Left ventricle myocardium superior (tissue), 1 donor: ENCODE measurements at regions of chr16 and their contacts with region 1.

Region 1: DNA sequence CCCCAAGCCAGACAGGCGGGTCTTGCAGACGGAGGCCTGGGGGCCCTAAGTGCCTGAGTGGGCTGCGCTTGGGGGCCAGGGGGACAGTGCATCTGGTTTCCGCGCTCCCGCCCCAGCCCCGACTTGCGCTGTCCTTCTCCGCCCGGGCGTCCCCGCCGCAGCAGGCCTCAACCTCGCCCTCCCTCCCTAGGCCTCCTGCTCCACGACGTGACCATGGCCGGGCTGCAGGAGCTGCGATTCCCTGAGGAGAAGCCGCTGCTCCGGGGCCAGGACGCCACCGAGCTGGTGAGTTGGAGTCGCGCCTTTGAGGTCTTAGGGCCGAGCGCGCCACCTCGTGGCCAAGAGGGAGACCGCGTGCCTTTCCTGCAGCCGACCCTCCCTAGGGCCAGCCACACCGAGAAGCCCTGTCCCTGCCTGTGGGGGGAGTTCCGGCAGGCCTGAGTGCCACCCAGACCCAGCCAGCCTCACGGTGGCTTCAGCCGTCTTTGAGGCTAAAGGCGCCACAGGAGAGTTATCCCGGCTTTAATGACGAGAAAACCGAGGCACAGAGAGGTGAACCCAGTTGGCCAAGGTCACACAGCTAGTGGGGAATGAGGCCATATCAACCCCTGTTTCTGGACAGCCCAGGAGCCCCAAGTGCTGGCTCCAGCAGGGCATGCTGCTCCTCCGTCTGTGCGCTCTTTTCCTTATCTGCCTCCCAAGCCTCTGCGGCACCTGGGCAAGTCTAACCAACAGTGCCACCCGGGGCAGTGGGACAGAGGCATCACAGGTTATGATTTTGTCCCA is 12.2 kb upstream of the NDRG4 start:
- DNase-seq: peak; percentile 93
- ATAC-seq: peak; percentile 73

Region 2: DNA sequence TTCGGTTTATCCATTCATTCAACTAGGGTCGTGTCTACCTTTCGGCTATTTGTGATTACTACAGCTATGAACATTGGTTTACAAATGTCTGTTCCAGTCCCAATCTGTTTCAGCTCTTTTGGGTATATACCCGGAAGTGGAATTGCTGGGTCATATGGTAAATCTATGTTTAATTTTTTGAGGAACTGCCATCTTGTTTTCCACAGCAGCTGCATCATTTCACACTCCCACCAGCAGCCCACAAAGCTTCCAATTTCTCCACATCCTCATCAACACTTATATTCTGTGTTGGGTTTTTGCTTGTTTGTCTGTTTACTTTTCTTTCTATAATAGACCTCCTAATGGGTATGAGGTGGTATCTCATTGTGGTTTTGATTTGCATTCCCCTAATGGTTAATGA is 144.2 kb before region 1 on chr16:
- intact Hi-C with region 1: loop called (anchors 5 kb)
- DNase-seq: no peak
- ATAC-seq: no peak